ENCODE measurements at regions of chr15 and their contacts with region 1.

Region 1: GRCh38 chr15:85504749-85505676 is 124.6 kb downstream of the AKAP13 start:
- DNase-seq: peak; percentile 37 to 55 (median 42)
- H3K4me3 ChIP-seq: no peak overlapping the region
- H3K4me3 Mint-ChIP-seq: no peak overlapping the region
- H3K27ac ChIP-seq: no peak overlapping the region
- H3K27ac Mint-ChIP-seq: peak overlapping the region in 4 of 7 donors; percentile 9 to 75 (median 34)
- H3K4me1 ChIP-seq: peaks cover 48% of the 10 kb centered on the region
- H3K4me1 Mint-ChIP-seq: peaks cover 56 to 65% (median 60%) of the 10 kb centered on the region in 4 donors
- H3K27me3 ChIP-seq: no peaks in the 10 kb centered on the region
- H3K27me3 Mint-ChIP-seq: no peaks in the 10 kb centered on the region

Region 2: DNA sequence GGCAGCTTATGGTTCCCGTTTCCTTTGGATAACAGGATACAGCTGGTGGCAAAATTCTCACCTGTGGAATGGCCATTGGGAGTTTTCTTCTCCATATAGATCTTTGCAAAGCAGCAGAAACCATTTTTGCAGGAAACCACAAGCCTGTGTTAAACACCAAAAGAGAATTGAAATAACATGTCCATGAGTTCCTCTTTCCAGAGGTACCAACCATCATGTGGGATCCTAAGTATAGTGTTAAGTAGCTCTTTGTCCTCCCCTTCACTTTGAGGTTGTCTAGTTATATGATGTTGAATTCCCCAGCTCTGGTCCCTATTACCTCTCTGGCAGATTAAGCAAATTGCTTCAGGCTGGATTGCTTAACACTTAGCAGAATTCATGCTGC is 29.7 kb before region 1 on chr15:
- CTCF ChIA-PET with region 1: interaction called, 13 read pairs
- POLR2A ChIA-PET with region 1: no interaction called
- intact Hi-C with region 1: no loop called
- DNase-seq: no peak
- H3K4me3 ChIP-seq: no peak overlapping the region
- H3K4me3 Mint-ChIP-seq: peak overlapping the region in 3 of 8 donors; percentile 0 to 22 (median 11)
- H3K27ac ChIP-seq: no peak overlapping the region
- H3K27ac Mint-ChIP-seq: peak overlapping the region in 3 of 7 donors; percentile 12 to 68 (median 32)
- H3K4me1 ChIP-seq: peaks cover 53% of the 10 kb centered on the region
- H3K4me1 Mint-ChIP-seq: peaks cover 63 to 94% (median 73%) of the 10 kb centered on the region in 4 donors
- H3K27me3 ChIP-seq: no peaks in the 10 kb centered on the region
- H3K27me3 Mint-ChIP-seq: no peaks in the 10 kb centered on the region

Region 3: GRCh38 chr15:85494048-85494793 is 10.8 kb before region 1 on chr15:
- CTCF ChIA-PET with region 1: interaction called, 36 read pairs
- POLR2A ChIA-PET with region 1: interaction called, 3 read pairs
- intact Hi-C with region 1: no loop called
- DNase-seq: peak; percentile 15 to 59 (median 33)
- H3K4me3 ChIP-seq: no peak overlapping the region
- H3K4me3 Mint-ChIP-seq: peak overlapping the region in 6 of 8 donors; percentile 5 to 64 (median 52)
- H3K27ac ChIP-seq: no peak overlapping the region
- H3K27ac Mint-ChIP-seq: peak overlapping the region; percentile 57 to 98 (median 89)
- H3K4me1 ChIP-seq: peaks cover 60% of the 10 kb centered on the region
- H3K4me1 Mint-ChIP-seq: peaks cover 60 to 88% (median 73%) of the 10 kb centered on the region in 4 donors
- H3K27me3 ChIP-seq: no peaks in the 10 kb centered on the region
- H3K27me3 Mint-ChIP-seq: no peaks in the 10 kb centered on the region